ENCODE measurements at regions of chr2 and their contacts with region 1.

Region 1: DNA sequence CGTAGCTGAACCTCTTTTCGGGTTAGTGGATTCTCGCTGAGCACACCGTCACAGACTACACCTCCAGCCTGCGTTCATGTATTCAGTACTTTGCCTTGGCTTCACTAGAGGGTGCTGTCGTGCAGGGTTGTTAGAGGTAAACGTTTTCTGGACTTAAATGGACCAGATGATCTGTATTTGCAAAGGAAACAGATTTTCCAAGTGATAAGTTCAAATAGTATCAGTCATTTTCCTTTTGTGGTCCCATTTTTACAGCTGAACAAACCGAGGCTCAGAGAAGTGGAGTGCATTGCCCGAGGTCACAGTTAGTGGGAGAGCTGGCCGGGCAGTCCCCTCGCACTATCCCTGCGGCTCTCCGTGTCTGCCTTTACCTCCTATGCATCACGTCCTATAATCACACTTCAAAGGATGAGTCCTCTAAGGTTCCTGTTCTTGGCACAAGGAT is 125.9 kb downstream of the MAP4K4 start:
- DNase-seq: peak in 39 of 42 donors; percentile 45 to 89 (median 66)

Region 2: DNA sequence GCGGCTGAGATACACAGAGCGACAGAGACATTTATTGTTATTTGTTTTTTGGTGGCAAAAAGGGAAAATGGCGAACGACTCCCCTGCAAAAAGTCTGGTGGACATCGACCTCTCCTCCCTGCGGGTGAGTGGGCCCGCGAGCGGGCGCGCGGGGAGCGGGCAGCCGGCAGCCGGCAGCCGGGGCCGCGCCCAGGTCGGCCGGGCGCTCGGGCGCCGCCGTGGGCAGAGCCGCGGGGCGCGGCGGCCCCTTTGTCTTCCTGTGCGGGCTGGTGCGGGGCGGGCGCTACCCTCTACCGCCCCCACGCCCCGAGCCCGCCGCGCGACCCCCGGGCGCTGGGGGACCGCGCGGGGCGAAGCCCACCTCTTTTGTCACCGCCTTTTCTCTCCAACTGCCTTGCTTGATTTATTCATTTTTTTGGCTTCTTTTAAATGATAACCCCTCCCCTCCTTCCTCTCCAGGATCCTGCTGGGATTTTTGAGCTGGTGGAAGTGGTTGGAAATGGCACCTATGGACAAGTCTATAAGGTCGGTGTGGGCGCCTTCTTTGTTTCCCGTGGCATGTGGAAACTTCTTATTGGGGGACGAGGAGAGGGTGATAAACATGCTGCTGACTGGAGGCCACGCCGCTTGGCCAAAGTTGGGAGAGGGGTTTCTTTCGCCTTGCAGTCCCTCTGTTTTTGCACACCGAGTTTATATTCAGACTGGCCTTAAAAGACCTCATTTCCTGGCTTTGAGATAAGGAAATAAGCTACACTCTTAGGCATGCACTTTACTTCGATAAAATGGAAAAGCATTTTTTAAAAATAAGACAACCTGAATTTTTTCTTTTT is 125.1 kb before region 1 on chr2:
- intact Hi-C with region 1: no loop called
- DNase-seq: peak in 17 of 42 donors; percentile 5 to 56 (median 34)

Region 3: GRCh38 chr2:101770726-101771125 is 52.6 kb before region 1 on chr2:
- intact Hi-C with region 1: loop called (anchors 10 kb)
- DNase-seq: peak in 8 of 42 donors; percentile 34 to 81 (median 60)